ENCODE measurements at regions of chr11 and their contacts with region 1.

Region 1: GRCh38 chr11:72026090-72026489 is 27.4 kb downstream of the IL18BP start:
- DNase-seq: no peak
- H3K4me3 ChIP-seq: no peak overlapping the region
- H3K27ac ChIP-seq: peak overlapping the region; percentile 52 to 54
- H3K4me1 ChIP-seq: peaks cover 0 to 63% (median 42%) of the 10 kb centered on the region in 4 donors
- H3K27me3 ChIP-seq: no peaks in the 10 kb centered on the region
- CTCF ChIP-seq: no peak

Region 2: DNA sequence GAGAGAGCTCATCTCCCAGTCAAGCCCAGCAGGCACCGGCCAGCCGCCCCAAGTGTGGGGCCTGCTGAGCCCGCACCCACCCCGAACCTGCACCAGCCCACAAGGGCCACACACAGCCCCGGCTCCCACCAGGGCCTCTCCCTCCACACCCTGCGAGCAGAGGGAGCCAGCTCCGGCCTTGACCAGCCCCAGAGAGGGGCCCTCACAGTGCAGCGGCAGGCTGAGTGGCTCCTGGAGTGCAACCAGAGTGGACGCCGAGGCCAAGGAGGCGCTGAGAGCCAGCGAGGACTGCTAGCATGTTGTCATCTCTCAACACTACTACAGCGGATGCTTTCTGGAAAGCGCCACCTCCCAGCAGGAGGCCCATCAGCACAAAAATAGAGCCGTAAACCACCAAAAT is 182.2 kb before region 1 on chr11:
- intact Hi-C with region 1: no loop called
- DNase-seq: no peak
- H3K4me3 ChIP-seq: no peak overlapping the region
- H3K27ac ChIP-seq: no peak overlapping the region
- H3K4me1 ChIP-seq: no peaks in the 10 kb centered on the region
- H3K27me3 ChIP-seq: no peaks in the 10 kb centered on the region
- CTCF ChIP-seq: no peak

Region 3: GRCh38 chr11:72085621-72086351 is 59.7 kb after region 1 on chr11:
- intact Hi-C with region 1: loop called (anchors 5 kb)
- DNase-seq: no peak
- H3K4me3 ChIP-seq: no peak overlapping the region
- H3K27ac ChIP-seq: no peak overlapping the region
- H3K4me1 ChIP-seq: peaks cover 0 to 12% (median 7%) of the 10 kb centered on the region in 4 donors
- H3K27me3 ChIP-seq: no peaks in the 10 kb centered on the region
- CTCF ChIP-seq: no peak

Region 4: GRCh38 chr11:72141066-72141465 is 115.0 kb after region 1 on chr11:
- intact Hi-C with region 1: loop called (anchors 10 kb)
- DNase-seq: no peak
- H3K4me3 ChIP-seq: no peak overlapping the region
- H3K27ac ChIP-seq: no peak overlapping the region
- H3K4me1 ChIP-seq: no peaks in the 10 kb centered on the region
- H3K27me3 ChIP-seq: no peaks in the 10 kb centered on the region
- CTCF ChIP-seq: no peak